WTC11 (cell line): ENCODE measurements at regions of chr1 and their contacts with region 1.

Region 1: DNA sequence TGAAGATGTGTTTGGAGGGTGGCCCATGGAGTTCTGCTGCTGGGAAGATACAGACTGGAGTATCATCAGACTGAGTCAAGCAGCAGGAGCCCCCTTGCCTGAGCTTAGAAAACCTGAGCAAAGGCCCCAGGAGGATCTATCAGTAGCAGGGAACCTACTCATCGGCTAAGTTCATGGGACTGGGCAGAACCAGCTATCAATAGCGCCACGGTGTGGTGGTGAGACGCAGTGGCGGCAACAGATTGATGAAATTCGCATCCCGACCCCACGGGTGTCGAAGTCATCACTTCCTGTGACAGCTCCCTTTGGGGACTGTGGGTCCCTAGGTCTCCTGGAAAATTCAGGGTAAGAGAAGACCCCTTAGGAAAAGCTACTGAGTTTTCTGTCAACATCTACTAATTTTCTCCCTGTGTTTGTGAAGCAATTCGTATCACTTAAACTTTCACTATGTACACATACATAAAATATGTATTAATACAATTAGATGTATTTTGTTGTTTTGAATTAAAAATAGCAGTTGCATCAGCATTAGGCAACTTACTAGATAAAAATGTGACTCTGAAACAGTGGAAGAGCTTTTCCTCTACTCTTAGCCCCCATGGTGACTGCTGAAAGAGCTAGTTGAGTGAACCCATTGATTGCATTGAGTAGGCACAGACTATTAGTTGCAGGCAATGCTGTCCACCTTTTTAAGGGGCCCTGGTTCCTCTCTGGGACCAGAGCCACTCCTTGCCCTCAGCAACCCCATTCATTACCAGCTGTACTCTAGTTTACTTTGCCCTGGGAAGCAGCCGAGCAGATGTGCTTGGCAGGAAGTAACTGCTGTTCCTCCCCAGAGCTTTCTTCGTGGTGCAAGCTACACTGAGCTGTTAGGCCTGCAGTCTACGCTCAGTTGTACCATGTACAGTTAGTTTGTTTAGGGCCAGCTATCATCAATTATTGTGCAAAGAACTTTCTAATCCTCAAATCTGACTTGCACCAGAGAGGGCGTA is 7.3 kb upstream of the CACNA1S start:
- DNase-seq: peak; percentile 77
- ATAC-seq: peak; percentile 74
- H3K4me3 Mint-ChIP-seq: no peak overlapping the region
- H3K27ac Mint-ChIP-seq: no peak overlapping the region
- H3K4me1 Mint-ChIP-seq: peaks cover 10% of the 10 kb centered on the region
- H3K27me3 Mint-ChIP-seq: peaks cover 53% of the 10 kb centered on the region
- CTCF ChIP-seq: peak; percentile 71

Region 2: GRCh38 chr1:201009962-201010645 is 109.4 kb before region 1 on chr1:
- CTCF ChIA-PET with region 1: interaction called, 15 read pairs
- POLR2A ChIA-PET with region 1: no interaction called
- DNase-seq: peak; percentile 49
- ATAC-seq: peak; percentile 36
- H3K4me3 Mint-ChIP-seq: no peak overlapping the region
- H3K27ac Mint-ChIP-seq: no peak overlapping the region
- H3K4me1 Mint-ChIP-seq: peaks cover 16% of the 10 kb centered on the region
- H3K27me3 Mint-ChIP-seq: no peaks in the 10 kb centered on the region
- CTCF ChIP-seq: no peak

Region 3: DNA sequence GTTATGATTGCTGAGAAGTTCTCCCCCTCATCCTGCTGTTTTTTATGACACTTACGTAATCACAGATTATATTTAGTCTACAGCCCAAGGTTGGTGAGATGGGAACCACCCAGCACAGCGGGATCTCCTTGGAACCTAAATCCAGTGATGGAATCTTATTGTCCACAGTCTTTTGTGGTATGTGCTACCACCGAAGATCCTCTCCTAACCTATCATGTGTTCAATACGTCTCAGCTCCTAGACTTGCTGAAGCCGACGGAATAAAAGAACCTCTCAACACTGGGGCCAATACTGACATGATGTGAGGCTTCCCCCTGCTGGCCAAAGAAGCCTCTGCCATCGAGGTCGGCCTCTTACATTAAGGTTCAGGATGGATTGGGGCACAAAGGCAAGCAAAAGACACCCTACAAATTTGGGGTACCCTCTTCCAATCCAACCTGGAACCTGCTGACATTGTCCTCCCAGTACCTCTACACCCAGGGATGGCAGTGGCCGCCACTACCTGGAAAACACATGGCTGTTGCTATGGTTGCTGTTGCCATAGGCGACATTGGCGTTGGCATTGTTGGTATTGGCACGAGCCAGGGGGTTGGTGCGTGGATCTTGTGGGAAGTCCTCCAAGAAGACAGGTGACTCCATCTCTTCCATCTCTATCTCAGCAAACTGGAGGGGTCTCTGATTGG is 76.6 kb before region 1 on chr1:
- CTCF ChIA-PET with region 1: interaction called, 10 read pairs
- POLR2A ChIA-PET with region 1: no interaction called
- DNase-seq: peak; percentile 70
- ATAC-seq: peak; percentile 87
- H3K4me3 Mint-ChIP-seq: no peak overlapping the region
- H3K27ac Mint-ChIP-seq: no peak overlapping the region
- H3K4me1 Mint-ChIP-seq: no peaks in the 10 kb centered on the region
- H3K27me3 Mint-ChIP-seq: no peaks in the 10 kb centered on the region; the same call in 1 of the 2 replicates
- CTCF ChIP-seq: peak; percentile 83

Region 4: DNA sequence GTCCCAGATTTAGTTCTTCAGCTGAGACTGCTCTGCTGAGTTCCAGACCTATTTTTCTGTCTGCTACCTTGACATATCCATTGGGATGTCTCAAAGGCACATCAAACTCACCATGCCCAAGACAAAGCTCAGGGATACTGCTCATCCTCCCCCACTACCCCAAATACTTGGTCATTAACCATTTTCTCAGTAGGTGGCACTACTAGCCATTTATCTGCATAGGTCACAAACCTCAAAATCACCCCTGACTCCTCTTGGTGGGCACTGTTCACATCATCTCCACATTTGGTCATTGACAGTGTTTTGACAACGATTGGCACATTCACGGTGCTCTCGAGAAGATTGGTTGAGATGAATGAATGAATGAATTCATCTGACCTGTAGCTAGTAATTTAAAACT is 39.4 kb before region 1 on chr1:
- CTCF ChIA-PET with region 1: interaction called, 124 read pairs
- POLR2A ChIA-PET with region 1: no interaction called
- DNase-seq: no peak
- ATAC-seq: no peak
- H3K4me3 Mint-ChIP-seq: no peak overlapping the region
- H3K27ac Mint-ChIP-seq: no peak overlapping the region
- H3K4me1 Mint-ChIP-seq: no peaks in the 10 kb centered on the region; the same call in 1 of the 2 replicates
- H3K27me3 Mint-ChIP-seq: no peaks in the 10 kb centered on the region
- CTCF ChIP-seq: no peak

Region 5: DNA sequence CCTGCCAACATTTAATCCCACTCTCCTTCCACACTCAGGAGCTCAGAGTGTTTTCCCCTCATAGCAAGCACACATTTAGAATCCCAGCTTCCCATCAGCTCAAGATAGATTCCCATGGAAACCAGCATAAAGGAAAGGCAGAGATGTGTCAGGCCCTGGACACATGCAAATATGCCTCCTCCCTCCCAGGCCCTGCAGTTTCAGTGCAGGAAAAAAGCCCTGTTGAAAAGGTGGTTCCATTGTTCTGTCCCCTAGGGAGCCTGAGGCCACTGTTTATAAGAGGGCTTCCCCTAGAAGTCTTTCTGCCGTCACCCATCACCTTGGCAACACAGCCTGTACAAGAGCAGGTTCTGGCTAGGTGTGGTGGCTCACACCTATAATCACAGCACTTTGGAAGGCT is 10.9 kb before region 1 on chr1:
- CTCF ChIA-PET with region 1: interaction called, 13 read pairs
- POLR2A ChIA-PET with region 1: no interaction called
- DNase-seq: no peak
- ATAC-seq: peak; percentile 32
- H3K4me3 Mint-ChIP-seq: no peak overlapping the region
- H3K27ac Mint-ChIP-seq: no peak overlapping the region
- H3K4me1 Mint-ChIP-seq: peaks cover 10% of the 10 kb centered on the region
- H3K27me3 Mint-ChIP-seq: peaks cover 12% of the 10 kb centered on the region
- CTCF ChIP-seq: no peak

Region 6: DNA sequence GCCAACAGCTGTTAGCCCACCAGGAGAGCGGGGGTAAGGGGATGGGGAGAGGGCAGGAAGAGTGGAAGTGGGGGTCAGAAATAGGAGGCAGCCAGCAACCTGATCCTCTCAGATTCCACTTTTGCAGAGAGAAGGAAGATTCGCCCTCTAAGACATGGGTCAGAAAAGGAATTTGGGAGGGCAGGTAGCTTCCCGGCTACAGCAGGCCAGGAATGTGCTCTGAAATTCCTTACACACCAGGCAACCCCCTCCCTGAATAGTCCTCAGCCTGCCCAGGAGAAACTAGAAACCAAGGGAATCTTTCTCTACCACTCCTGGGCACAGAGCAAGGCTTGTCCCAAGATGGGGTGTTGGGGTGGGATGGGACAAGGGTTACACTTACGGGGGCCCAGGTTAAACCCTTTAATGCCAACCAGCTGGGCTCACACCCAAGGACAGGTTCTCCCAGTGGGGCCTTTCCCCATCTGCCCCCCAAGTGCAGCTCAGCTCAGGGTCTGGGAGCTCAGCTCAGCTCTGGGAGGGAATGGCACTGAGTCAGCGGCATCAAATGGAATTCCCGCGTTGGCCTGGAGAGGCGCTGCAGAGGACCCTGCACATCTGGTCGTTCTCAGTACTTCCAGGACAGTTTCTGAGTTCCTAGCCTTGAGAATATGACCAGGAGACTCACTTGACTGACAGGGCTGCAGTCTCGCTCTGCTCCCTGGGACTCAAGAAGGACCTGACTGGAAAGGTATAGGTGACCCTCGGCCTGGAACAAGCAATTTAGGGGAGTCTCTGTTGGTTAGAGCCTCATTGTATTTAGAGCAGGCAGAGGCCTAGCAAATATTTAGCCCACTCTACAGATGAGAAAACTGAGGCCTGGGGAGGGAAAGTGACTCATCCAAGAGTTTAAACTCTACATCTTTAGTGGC is 257.2 kb after region 1 on chr1:
- CTCF ChIA-PET with region 1: interaction called, 10 read pairs
- POLR2A ChIA-PET with region 1: no interaction called
- DNase-seq: peak; percentile 86
- ATAC-seq: peak; percentile 81
- H3K4me3 Mint-ChIP-seq: peak overlapping the region; percentile 58
- H3K27ac Mint-ChIP-seq: peak overlapping the region; percentile 98
- H3K4me1 Mint-ChIP-seq: peaks cover 54% of the 10 kb centered on the region
- H3K27me3 Mint-ChIP-seq: peaks cover 7% of the 10 kb centered on the region; the same call in 1 of the 2 replicates
- CTCF ChIP-seq: peak; percentile 56